PC-3 (cell line): ENCODE measurements at regions of chr2 and their contacts with region 1.

Region 1: DNA sequence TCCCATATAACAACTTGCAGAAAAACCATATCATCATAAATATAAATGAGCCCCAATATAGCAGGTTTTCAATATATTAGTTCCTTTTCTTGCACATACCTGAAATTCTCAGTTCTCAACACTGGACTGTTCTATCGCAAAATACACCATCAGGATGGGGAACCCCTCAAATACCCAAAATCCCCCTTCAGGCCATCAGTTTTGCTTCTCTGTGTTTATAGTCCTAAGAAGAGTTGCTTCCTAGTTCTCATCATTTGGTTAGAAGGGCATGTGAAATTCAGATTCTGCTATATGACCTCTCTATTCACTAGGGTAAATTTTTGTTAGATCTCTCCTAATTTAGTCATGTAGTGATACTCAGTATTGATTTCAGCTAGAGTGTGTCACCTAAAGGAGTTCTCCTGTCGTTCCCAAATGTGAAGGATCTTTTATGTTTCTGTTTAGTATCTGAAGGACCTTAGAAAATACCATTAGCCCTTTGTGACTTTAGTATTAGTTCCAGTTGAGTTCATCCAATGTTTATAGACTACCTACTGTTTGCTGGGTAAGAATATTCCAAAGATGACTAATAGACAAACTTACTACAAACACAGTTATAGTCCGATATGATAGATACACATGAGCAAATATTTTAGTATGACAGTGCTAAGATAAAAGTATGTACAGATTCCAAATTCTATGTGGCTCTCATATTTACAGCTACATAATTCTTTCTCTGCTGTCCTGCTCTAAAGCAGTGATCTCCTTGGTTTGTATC is 115.8 kb downstream of the TTC27 start:
- DNase-seq: peak; percentile 77
- ATAC-seq: peak; percentile 97
- H3K4me3 ChIP-seq: no peak overlapping the region
- H3K27ac ChIP-seq: peak overlapping the region; percentile 33
- H3K4me1 ChIP-seq: peaks cover 19% of the 10 kb centered on the region
- H3K27me3 ChIP-seq: no peaks in the 10 kb centered on the region
- CTCF ChIP-seq: no peak

Region 2: DNA sequence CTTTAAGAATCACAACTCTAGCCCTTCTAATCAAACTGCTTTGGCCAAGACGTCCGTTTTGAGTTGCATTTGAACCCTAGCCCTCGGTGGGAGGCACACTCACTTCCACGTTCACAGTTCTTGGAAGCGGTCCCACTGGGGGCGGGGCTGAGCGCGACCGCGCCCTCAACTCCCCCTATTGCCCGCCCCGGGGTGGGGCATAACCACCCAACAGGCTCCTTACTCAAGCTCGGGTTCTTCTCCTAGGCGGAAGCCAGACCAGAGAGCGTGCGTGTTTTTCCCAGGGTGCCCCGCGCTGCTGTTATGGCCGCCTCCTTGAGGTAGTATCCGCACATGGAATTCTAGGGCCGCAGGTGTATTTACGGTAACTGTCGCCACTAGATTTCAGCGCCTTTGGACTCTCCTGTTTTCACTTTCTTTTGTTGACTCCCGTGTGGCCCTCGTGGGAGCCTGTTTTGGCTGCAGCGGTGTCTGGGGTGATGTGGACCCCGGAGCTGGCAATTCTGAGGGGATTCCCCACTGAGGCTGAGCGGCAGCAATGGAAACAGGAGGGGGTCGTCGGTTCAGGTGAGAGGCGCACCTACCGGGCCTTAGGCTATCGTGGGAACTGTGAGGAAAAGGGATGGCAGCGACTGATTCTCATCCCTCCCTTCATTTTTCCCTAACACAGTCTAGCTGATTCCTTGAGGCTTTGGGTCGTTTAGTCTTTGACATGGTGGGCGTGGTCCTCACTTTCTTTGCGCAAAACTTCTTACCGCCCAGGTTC is 115.7 kb before region 1 on chr2 and contains the start of gene TTC27:
- CTCF ChIA-PET with region 1: no interaction called
- POLR2A ChIA-PET with region 1: no interaction called
- intact Hi-C with region 1: loop called (anchors 1 kb)
- DNase-seq: peak; percentile 96
- ATAC-seq: peak; percentile 98
- H3K4me3 ChIP-seq: peak within 1 kb of the TSS; percentile 100
- H3K27ac ChIP-seq: peak within 1 kb of the TSS; percentile 49
- H3K4me1 ChIP-seq: peaks cover 24% of the 10 kb centered on the region
- H3K27me3 ChIP-seq: no peaks in the 10 kb centered on the region
- CTCF ChIP-seq: no peak
- total RNA-seq, gene TTC27: 33.0 and 33.5 TPM in 2 replicates

Region 3: GRCh38 chr2:32691678-32692077 is 52.0 kb before region 1 on chr2:
- CTCF ChIA-PET with region 1: no interaction called
- POLR2A ChIA-PET with region 1: no interaction called
- intact Hi-C with region 1: loop called (anchors 5 kb)
- DNase-seq: peak; percentile 81
- ATAC-seq: peak; percentile 52
- H3K4me3 ChIP-seq: no peak overlapping the region
- H3K27ac ChIP-seq: no peak overlapping the region
- H3K4me1 ChIP-seq: peaks cover 23% of the 10 kb centered on the region
- H3K27me3 ChIP-seq: no peaks in the 10 kb centered on the region
- CTCF ChIP-seq: no peak